ENCODE measurements at regions of chr7 and their contacts with region 1.

Region 1: DNA sequence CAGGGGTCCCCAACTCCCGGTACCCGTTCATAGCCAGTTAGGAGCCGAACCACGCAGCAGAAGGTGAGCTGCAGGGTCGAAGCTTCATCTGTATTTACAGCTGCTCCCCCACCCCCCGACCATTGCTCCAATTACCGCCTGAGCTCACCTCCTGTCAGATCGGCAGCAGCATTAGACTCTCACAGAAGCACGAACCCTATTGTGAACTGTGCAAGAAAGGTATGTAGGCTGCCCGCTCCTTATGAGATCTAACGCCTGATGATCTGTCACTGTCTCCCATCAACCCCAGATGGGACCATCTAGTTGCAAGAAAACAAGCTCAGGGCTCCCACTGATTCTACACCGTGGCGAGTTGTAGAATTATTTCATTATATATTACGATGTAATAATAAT is 14.6 kb upstream of the AZGP1 start:
- DNase-seq: no peak

Region 2: GRCh38 chr7:99910976-99911375 is 79.5 kb before region 1 on chr7:
- intact Hi-C with region 1: loop called (anchors 2 kb)
- DNase-seq: no peak

Region 3: GRCh38 chr7:99975782-99976521 is 14.5 kb before region 1 on chr7 and contains the start of gene AZGP1:
- intact Hi-C with region 1: loop called (anchors 1 kb)
- DNase-seq: peak in 4 of 10 donors; percentile 30 to 74 (median 42)

Region 4: DNA sequence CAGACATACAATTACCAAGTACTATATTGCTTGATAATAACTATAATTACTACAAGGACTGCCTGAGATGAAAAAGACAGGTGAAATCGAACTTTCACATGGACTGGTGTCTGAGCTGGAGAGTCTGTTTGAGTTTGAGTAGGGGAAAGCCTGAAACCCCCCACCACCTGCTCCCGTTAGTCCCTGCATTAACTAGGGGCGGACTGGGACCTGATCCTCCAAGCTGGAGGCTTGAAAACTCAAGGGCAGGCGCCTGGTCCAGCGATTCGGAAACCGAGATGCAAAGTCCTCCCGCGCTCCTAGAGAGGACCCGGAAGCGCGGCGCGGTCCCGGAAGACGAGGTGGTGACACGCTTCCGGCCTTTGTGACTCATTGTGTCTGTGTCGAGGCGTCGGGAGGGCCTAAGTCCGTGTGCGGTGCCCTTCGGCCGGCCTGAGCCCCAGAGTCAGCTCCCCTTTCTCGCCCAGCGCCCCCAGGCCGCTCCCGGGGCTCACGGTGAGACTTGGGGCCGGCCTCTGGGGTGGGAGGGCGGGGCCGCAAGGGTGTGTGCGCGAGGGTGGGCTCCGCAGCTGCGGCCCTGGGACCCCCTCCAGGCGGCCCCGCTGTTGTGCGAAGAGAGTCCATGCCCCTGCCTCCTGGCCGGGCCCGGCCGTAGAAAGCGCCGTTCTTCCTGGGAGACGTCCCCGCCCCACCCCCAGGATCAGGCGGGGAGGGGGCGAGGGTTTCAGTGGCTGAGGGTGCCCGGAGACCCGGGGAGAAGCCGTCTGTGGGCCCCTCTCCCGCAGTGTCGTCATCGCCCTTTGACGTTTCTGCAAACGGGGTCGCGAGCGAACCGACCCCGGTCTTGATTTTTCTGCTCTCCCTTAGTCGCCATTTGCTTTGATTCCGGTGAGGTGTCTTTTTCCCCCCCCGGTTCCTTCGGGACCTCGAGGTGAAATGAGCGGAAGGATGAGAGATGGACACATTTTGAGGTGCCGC is 25.1 kb after region 1 on chr7 and contains the start of gene ZKSCAN1:
- intact Hi-C with region 1: no loop called
- DNase-seq: peak; percentile 82 to 98 (median 89)

Measured in posterior cingulate gyrus (tissue), 11 donors.